ENCODE measurements at regions of chr21 and their contacts with region 1.

Region 1: DNA sequence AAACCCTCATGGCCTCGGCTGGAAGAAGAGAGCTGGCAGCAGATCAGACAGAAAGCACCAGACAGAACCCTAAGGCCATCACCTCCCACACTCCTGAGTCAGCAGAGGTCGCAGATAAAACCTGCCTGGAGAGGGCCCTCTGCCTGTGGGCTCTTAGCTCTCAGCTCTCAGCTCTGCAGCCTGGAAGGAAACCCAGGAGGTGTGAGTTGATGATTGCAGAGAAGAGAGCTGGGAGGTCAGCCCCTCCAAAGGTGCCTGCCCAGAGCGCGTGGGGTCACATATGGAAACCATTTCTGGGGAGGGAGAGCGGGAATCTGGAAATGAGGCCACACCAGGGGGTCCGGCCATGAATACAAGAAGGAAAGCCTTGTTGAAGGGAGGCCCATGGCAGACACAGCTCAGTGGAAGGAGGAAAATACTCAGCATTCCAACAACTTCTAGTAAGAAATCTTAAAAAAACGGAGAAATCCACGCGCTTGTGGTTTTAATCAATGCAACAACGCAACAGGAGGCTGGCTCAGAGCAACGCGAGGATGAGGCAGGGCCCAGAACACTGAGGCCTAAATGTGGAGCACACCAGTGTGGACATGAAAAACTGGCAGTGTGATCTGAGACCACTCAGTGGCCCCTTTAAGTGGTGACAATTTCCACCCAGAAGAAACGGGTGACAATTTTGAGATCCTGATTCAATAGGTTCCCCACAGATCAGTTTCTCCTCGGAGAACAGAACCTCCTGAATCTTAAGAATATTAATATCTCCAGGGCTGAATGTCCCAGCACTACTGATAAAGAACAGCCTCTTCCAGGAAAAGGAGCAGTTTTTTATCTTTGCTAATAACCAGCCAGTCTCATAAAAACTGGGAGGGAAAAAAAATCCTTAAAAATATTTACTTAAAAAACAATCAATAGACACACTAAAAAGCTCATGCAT is 45.7 kb downstream of the PSMG1 start:
- DNase-seq: no peak

Region 2: GRCh38 chr21:38505654-38506515 is 631.6 kb before region 1 on chr21:
- intact Hi-C with region 1: loop called (anchors 5 kb)
- DNase-seq: no peak

Region 3: DNA sequence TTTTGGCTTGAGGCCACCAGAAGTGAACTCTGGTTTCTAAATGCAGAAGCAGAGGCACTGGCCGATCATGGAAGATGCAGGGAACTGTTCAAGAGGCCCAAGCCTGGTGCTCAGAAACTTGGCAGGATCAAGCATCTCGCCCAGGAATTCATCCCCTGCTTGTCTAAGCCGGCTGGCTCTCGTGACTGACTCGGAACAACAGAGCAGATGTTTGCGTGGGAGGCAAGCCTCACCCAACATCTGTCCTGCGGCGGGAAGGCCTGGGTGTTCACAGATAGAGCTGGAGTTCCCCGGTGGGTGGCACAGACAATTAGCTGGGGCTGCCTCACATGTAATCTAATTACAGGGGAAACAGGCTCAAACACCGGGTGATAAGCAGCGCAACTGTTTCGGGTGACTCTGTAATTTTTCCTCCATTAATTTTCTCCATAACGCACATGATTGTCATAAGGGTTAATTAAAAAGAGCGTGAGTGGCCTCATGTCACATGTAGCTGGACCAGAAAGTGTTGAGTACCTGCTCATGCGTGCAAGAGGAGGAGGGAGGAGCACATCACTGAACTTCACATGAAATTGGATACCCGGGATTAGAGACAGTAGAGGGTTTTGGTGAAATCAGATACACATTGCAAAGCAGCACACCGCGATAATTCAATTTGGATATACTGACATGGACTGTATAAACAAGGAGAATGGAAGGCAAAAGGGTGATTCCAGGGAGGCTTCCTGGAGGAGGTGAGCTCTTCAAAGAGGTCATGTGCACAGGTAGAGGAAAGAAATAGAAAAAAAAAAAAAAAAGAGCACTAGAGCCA is 151.7 kb before region 1 on chr21:
- intact Hi-C with region 1: no loop called
- DNase-seq: peak; percentile 84